ENCODE measurements at regions of chr6 and their contacts with region 1.

Region 1: DNA sequence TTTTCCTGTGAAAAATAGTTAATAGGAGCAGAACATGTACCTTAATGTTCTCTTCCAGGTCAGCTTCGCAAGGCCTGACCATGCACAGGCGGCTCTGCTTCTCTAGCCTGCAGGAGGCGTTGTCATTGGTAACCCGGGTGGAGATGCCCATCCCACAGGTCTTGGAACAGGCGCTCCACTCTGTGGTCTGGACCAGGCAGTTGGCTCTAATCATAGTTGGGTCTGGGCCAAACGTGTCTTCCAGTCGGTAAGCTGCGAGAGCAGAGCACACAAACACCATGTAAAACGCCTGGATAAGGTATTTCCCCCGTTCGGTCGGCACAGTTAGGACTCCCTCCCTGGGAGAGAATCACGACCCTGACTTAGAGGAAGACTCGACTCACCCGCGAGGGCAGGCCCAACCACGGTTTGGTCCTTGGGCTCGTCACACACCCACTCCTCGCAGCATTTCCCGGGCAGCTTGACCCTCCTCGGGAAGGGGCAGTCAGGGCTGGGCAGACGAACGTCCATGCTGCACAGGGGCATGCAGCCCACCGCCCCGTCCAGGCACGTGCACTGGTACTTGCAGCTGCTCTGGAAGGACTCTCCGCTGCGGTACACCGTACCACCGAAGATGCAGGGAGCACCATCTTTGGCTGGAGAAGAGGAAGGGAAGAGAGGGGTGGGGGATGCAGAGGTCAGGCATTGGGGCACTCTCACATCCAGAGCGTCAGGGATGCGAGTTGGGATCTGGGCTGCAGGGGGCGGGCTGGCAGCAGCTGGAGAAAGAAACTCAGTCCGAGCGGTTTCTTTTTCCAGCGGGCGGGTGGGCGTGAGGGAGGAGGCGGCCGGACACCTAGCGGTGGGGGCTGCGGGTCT is 1.0 kb downstream of the CCN2 start:
- DNase-seq: peak; percentile 87
- H3K4me3 ChIP-seq: peak overlapping the region; percentile 98
- H3K27ac ChIP-seq: peak overlapping the region; percentile 97
- H3K27me3 ChIP-seq: no peaks in the 10 kb centered on the region
- CTCF ChIP-seq: peak; percentile 46

Region 2: GRCh38 chr6:131694831-131695426 is 255.2 kb before region 1 on chr6:
- CTCF ChIA-PET with region 1: no interaction called
- POLR2A ChIA-PET with region 1: no interaction called
- DNase-seq: peak; percentile 50
- H3K4me3 ChIP-seq: no peak overlapping the region
- H3K27ac ChIP-seq: no peak overlapping the region
- H3K27me3 ChIP-seq: no peaks in the 10 kb centered on the region
- CTCF ChIP-seq: peak; percentile 98

Region 3: GRCh38 chr6:131923356-131923755 is 26.8 kb before region 1 on chr6:
- CTCF ChIA-PET with region 1: interaction called, 6 read pairs
- POLR2A ChIA-PET with region 1: interaction called, 12 read pairs
- DNase-seq: no peak
- H3K4me3 ChIP-seq: no peak overlapping the region
- H3K27ac ChIP-seq: no peak overlapping the region
- H3K27me3 ChIP-seq: no peaks in the 10 kb centered on the region
- CTCF ChIP-seq: peak; percentile 53

Region 4: DNA sequence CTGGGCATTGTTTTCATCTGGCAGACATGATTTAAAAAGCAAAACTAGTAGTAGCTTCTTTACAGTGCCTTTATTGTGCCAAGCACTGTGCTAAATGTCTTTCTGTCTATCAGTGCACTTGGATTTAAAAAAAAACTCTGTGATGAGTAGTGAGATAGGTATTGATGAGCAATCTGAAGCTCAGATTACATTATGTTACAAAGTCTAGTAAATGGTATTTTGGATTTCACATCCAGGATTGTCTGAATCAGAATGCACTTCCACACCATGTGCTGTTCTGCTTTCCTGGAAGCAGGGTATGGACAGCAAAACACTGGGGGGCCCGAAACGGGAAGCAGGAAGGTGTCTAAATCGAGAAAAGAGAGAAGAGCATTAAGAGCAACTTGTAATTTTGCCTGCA is 104.4 kb after region 1 on chr6:
- CTCF ChIA-PET with region 1: no interaction called
- POLR2A ChIA-PET with region 1: interaction called, 37 read pairs
- DNase-seq: peak; percentile 53
- H3K4me3 ChIP-seq: no peak overlapping the region
- H3K27ac ChIP-seq: peak overlapping the region; percentile 90
- H3K27me3 ChIP-seq: no peaks in the 10 kb centered on the region
- CTCF ChIP-seq: no peak

Region 5: DNA sequence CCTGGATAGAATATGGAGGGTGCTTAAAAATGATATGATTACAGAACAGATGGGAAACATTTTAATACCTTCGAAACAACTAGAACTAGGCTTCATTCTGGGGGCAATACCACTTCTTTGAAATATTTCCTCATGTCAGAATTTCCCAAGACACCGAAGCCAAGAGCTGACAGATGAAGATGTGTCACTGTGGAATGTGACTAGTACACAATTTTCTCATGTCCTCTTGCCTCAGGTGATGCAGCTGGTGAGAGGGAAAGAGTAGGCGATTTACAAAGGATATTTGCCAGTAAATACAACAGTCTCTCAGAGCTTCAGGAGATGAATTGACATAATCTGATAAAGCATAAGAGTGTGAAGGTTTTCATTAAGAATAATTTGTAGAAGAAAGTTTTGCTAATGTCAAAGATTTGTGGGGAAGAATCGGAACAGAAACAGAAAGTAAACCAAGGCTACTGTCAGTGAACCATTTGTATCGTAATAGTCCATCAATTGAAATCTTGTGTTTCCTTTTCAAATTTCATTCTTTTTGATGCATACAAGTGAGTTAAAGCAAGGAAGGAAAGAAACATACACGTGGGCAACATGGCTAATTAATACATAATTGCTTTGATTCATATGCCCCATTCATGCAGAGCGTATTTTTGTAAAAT is 165.7 kb after region 1 on chr6:
- CTCF ChIA-PET with region 1: no interaction called
- POLR2A ChIA-PET with region 1: interaction called, 10 read pairs
- DNase-seq: no peak
- H3K4me3 ChIP-seq: peak overlapping the region; percentile 40
- H3K27ac ChIP-seq: no peak overlapping the region
- H3K27me3 ChIP-seq: no peaks in the 10 kb centered on the region
- CTCF ChIP-seq: no peak

Region 6: GRCh38 chr6:132202574-132202973 is 252.4 kb after region 1 on chr6:
- CTCF ChIA-PET with region 1: no interaction called
- POLR2A ChIA-PET with region 1: interaction called, 12 read pairs
- DNase-seq: peak; percentile 81
- H3K4me3 ChIP-seq: no peak overlapping the region
- H3K27ac ChIP-seq: no peak overlapping the region
- H3K27me3 ChIP-seq: no peaks in the 10 kb centered on the region
- CTCF ChIP-seq: no peak

Region 7: GRCh38 chr6:132236744-132237143 is 286.6 kb after region 1 on chr6:
- CTCF ChIA-PET with region 1: no interaction called
- POLR2A ChIA-PET with region 1: interaction called, 10 read pairs
- DNase-seq: no peak
- H3K4me3 ChIP-seq: no peak overlapping the region
- H3K27ac ChIP-seq: no peak overlapping the region
- H3K27me3 ChIP-seq: no peaks in the 10 kb centered on the region
- CTCF ChIP-seq: no peak

Region 8: GRCh38 chr6:132962936-132963868 is 1013.1 kb after region 1 on chr6:
- CTCF ChIA-PET with region 1: no interaction called
- POLR2A ChIA-PET with region 1: no interaction called
- DNase-seq: no peak
- H3K4me3 ChIP-seq: no peak overlapping the region
- H3K27ac ChIP-seq: no peak overlapping the region
- H3K27me3 ChIP-seq: no peaks in the 10 kb centered on the region
- CTCF ChIP-seq: peak; percentile 89

Measured in AG04450 (cell line).